K562 (cell line): ENCODE measurements at regions of chr5 and their contacts with region 1.

Region 1: DNA sequence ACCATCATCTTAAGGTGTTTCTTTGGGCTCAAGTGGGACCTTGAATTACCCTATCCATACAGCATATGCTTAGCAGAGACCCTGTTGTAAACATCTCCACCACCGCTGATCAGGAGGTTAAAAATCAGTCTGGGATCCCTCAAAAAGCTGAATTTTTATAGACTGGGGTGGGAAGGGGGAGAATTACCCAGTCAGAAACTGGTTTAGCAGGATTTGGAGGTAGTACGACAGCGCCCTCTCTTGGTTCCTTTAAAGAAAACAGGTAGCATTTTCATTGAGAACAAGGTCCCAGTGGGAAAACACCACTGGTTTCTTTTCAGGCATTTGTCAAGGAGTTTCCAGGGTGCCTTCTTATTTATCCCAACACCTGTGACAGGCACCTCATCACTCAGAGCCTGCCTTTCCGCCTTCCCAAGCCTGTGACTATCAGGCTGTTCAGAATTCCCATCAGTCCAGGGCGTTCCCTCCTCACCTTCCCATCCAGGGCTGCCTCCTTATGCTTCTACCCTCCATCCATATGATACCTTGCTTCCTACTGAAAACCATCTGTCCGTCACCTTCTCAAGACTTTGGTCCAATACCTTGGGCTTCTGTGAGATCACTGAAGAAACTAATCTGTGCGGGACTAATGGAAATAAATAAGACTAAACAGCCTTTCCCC is 203.8 kb upstream of the RAI14 start:
- DNase-seq: peak in 2 of 4 experiments; percentile 32 to 43
- ATAC-seq: peak; percentile 79
- H3K4me3 ChIP-seq: no peak overlapping the region
- H3K27ac ChIP-seq: no peak overlapping the region
- H3K4me1 ChIP-seq: no peaks in the 10 kb centered on the region
- H3K27me3 ChIP-seq: peaks cover 12 to 36% of the 10 kb centered on the region in 2 experiments; a peak in 4 of 5 replicates
- CTCF ChIP-seq: peak; percentile 55 to 75 (median 59)
- EP300 ChIP-seq: no peak
- POLR2A ChIP-seq: no peak
- RAD21 ChIP-seq: peak; percentile 51 to 69

Region 2: GRCh38 chr5:33997331-33997983 is 454.8 kb before region 1 on chr5:
- CTCF ChIA-PET with region 1: no interaction called
- POLR2A ChIA-PET with region 1: no interaction called
- in situ Hi-C with region 1: loop called (anchors 10 kb)
- intact Hi-C with region 1: loop called (anchors 5 kb)
- DNase-seq: peak in 2 of 4 experiments; percentile 41 to 56
- ATAC-seq: peak; percentile 84
- H3K4me3 ChIP-seq: no peak overlapping the region
- H3K27ac ChIP-seq: no peak overlapping the region
- H3K4me1 ChIP-seq: no peaks in the 10 kb centered on the region
- H3K27me3 ChIP-seq: no peaks in the 10 kb centered on the region
- CTCF ChIP-seq: peak; percentile 67 to 71 (median 68)
- EP300 ChIP-seq: no peak
- POLR2A ChIP-seq: no peak
- RAD21 ChIP-seq: peak; percentile 35 to 74; a peak in 3 of 4 replicates

Region 3: DNA sequence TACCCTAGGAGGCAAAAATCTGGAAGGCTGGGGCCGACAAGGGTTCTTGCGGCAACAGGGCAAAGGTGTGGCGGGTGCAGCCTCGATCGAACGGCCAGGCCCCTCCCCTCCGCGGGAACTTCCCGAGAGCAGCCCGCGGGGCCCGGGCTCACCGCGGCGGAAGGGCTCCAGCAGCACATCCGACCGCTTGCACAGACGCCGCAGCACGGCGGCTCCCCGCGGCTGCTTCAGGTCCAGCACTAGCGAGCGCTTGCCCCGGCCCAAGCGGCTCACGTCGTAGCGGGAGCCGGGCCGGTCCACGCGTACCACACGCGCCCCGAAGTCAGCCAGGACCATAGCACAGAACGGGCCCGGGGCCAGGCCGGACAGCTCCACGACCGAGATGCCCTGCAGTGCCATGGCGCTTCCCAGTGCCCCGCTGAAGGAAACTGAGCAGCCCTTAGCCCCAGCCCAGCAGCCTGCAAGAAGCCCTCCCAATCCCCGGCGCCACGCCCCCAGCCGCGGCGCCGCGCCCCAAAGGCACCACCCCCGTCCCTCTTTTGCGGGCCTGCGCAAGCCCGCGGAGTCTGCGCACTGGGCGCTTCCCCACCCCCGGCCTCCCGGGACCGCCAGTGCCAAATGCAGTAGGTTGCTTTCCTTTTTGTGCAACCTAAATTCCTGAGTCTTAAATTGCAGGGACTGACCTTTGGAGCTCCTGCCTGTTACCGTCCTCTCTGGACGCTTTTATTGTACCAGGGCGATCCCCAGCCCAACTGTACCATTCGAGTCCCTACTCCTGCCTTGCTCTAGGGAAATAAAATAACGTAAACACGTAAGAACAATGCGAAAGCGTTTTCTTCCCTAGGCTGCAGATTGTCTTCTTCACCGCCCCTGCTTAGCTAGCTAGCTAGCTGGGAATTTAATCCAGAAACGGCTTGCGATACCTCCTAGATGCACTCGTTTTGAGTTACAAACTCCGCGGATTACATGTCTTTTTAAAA is 444.4 kb before region 1 on chr5 and contains the start of gene AMACR:
- CTCF ChIA-PET with region 1: no interaction called
- POLR2A ChIA-PET with region 1: no interaction called
- in situ Hi-C with region 1: loop called (anchors 10 kb)
- intact Hi-C with region 1: no loop called
- DNase-seq: peak; percentile 93 to 96 (median 95)
- ATAC-seq: peak; percentile 97
- H3K4me3 ChIP-seq: peak within 1 kb of the TSS; percentile 61
- H3K27ac ChIP-seq: peak within 1 kb of the TSS; percentile 72
- H3K4me1 ChIP-seq: peaks cover 7 to 12% of the 10 kb centered on the region in 2 experiments; a peak in 4 of 5 replicates
- H3K27me3 ChIP-seq: peaks cover 0 to 3% of the 10 kb centered on the region in 2 experiments; a peak in 1 of 5 replicates
- CTCF ChIP-seq: peak in 2 of 3 experiments; percentile 15 to 28; a peak in 2 of 6 replicates
- EP300 ChIP-seq: no peak
- POLR2A ChIP-seq: peak; percentile 86
- RAD21 ChIP-seq: no peak
- polyA plus RNA-seq, gene AMACR: 0.72 to 0.81 TPM

Region 4: GRCh38 chr5:34599471-34600117 is 147.3 kb after region 1 on chr5:
- CTCF ChIA-PET with region 1: no interaction called
- POLR2A ChIA-PET with region 1: no interaction called
- in situ Hi-C with region 1: no loop called
- intact Hi-C with region 1: no loop called
- DNase-seq: no peak
- ATAC-seq: no peak
- H3K4me3 ChIP-seq: no peak overlapping the region
- H3K27ac ChIP-seq: no peak overlapping the region
- H3K4me1 ChIP-seq: peaks cover 0 to 10% of the 10 kb centered on the region in 2 experiments; a peak in 3 of 5 replicates
- H3K27me3 ChIP-seq: peaks cover 0 to 5% of the 10 kb centered on the region in 2 experiments; a peak in 1 of 5 replicates
- CTCF ChIP-seq: no peak
- EP300 ChIP-seq: no peak
- POLR2A ChIP-seq: no peak
- RAD21 ChIP-seq: no peak